Activated CD4-positive, alpha-beta T cell treated with anti-CD3 and anti-CD28 coated beads, Interleukin-2, amount 10 ng/mL, durations not matched to agents 24 days and 14 days (primary cell): ENCODE measurements at regions of chr15 and their contacts with region 1.

Region 1: GRCh38 chr15:73697033-73697467 is 12.9 kb downstream of the CD276 start:
- DNase-seq: peak; percentile 95
- H3K4me3 Mint-ChIP-seq: peak overlapping the region; percentile 54
- H3K27ac Mint-ChIP-seq: peak overlapping the region; percentile 63
- H3K4me1 Mint-ChIP-seq: peaks cover 45% of the 10 kb centered on the region
- H3K27me3 Mint-ChIP-seq: peaks cover 56% of the 10 kb centered on the region

Region 2: DNA sequence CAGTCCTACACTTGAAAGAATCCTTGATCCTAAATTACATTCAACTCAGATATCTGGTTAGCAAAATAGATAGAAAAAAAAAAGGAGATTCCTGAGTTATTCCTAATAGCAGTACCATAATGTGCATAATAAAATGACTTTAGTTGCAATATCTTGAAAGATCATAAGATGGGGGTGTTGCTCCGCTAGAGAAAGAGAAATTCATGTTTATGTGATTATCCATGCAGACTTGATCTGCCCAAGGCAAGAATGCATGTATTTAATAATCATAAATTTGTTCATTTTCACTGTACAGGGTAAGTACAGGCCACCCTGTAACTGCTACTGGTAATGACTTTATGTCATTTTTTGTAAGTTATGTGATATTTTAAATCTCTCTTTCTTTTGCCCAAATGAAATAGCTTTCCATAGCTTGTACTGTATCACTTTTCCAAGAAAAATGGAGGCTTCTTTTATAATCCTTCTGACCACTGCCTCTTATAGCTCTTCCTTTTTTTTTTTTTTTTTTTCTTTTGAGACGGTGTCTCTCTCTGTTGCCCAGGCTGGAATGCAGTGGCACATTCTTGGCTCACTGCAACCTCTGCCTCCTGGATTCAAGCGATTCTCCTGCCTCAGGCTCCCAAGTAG is 412.8 kb before region 1 on chr15:
- intact Hi-C with region 1: loop called (anchors 10 kb)
- DNase-seq: no peak
- H3K4me3 Mint-ChIP-seq: no peak overlapping the region
- H3K27ac Mint-ChIP-seq: no peak overlapping the region
- H3K4me1 Mint-ChIP-seq: peaks cover 7% of the 10 kb centered on the region
- H3K27me3 Mint-ChIP-seq: no peaks in the 10 kb centered on the region

Region 3: DNA sequence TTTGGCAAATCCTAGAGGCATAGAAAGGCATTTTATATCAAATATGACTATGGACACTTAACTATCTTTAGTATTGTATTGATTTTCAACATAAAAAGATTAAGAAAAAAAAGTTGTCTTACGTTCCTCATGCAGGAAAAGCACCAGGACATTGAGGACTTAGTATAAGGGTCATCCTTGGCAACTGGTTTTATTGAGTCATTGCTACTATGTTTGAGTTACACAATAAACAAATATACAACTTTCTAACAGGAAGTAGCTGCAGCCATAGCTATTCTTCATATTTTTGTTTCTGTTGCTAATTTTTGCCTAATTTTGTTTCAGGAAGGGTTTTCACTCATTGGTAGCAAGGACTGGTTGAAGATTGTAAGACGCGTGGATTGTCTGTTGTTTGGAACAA is 156.9 kb before region 1 on chr15:
- intact Hi-C with region 1: no loop called
- DNase-seq: no peak
- H3K4me3 Mint-ChIP-seq: no peak overlapping the region
- H3K27ac Mint-ChIP-seq: no peak overlapping the region
- H3K4me1 Mint-ChIP-seq: no peaks in the 10 kb centered on the region
- H3K27me3 Mint-ChIP-seq: peaks cover 9% of the 10 kb centered on the region

Region 4: GRCh38 chr15:73633111-73633990 is 63.7 kb before region 1 on chr15 and contains the start of gene NPTN:
- intact Hi-C with region 1: loop called (anchors 1 kb)
- DNase-seq: peak; percentile 100
- H3K4me3 Mint-ChIP-seq: peak within 1 kb of the TSS; percentile 86
- H3K27ac Mint-ChIP-seq: peak within 1 kb of the TSS; percentile 82
- H3K4me1 Mint-ChIP-seq: peaks cover 36% of the 10 kb centered on the region
- H3K27me3 Mint-ChIP-seq: peaks cover 20% of the 10 kb centered on the region
- total RNA-seq, gene NPTN: 61.6 and 68.7 TPM in 2 replicates

Region 5: DNA sequence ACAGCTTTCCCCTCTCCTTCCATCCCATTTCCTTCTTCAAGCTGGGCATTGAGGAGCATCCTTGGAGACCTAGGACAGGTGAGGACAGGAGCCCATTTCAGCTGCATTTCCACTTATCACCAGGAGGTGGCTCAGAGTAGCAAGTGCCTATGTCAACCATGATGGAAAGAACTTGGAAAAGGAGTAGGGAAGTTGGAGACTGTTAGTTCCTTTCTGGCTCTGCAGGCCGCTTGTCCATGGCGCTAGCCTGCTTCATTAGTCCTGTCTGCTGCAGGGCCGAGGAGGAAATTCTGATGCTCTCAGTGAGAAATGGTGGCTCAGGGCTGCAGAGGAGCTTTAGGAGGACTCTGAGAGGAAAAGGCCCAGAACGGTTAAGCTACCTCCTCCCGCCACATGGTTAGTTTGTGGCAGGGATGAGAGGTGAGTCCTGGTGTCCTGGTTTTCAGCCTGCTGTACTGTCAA is 19.9 kb before region 1 on chr15:
- intact Hi-C with region 1: loop called (anchors 1 kb)
- DNase-seq: peak; percentile 87
- H3K4me3 Mint-ChIP-seq: no peak overlapping the region
- H3K27ac Mint-ChIP-seq: no peak overlapping the region
- H3K4me1 Mint-ChIP-seq: peaks cover 14% of the 10 kb centered on the region
- H3K27me3 Mint-ChIP-seq: peaks cover 28% of the 10 kb centered on the region

Region 6: DNA sequence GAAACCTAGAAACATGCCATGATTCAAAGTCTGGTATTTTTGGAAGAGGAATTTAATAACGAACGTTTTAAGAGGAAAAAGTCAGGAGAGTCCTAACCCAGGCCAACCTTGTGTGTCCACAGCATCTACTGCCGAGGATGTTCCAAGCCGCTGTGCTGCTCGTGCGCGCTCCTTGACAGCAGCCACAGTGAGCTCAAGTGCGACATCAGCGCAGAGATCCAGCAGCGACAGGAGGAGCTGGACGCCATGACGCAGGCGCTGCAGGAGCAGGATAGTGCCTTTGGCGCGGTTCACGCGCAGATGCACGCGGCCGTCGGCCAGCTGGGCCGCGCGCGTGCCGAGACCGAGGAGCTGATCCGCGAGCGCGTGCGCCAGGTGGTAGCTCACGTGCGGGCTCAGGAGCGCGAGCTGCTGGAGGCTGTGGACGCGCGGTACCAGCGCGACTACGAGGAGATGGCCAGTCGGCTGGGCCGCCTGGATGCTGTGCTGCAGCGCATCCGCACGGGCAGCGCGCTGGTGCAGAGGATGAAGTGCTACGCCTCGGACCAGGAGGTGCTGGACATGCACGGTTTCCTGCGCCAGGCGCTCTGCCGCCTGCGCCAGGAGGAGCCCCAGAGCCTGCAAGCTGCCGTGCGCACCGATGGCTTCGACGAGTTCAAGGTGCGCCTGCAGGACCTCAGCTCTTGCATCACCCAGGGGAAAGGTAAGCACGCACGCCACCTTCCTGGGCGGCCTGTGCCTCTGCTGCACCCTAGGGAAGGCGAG is 325.8 kb after region 1 on chr15:
- intact Hi-C with region 1: no loop called
- DNase-seq: no peak
- H3K4me3 Mint-ChIP-seq: no peak overlapping the region
- H3K27ac Mint-ChIP-seq: no peak overlapping the region
- H3K4me1 Mint-ChIP-seq: peaks cover 8% of the 10 kb centered on the region
- H3K27me3 Mint-ChIP-seq: no peaks in the 10 kb centered on the region